ENCODE measurements at regions of chr14 and their contacts with region 1.

Region 1: GRCh38 chr14:23120541-23121251 is 1.6 kb upstream of the CEBPE start:
- DNase-seq: peak; percentile 91
- ATAC-seq: peak; percentile 84
- H3K4me3 Mint-ChIP-seq: peak overlapping the region; percentile 22
- H3K27ac Mint-ChIP-seq: peak overlapping the region; percentile 91
- H3K4me1 Mint-ChIP-seq: peaks cover 35% of the 10 kb centered on the region
- H3K27me3 Mint-ChIP-seq: no peaks in the 10 kb centered on the region

Region 2: GRCh38 chr14:23076785-23077408 is 43.8 kb before region 1 on chr14:
- CTCF ChIA-PET with region 1: interaction called, 16 read pairs
- DNase-seq: no peak
- ATAC-seq: peak; percentile 58
- H3K4me3 Mint-ChIP-seq: no peak overlapping the region
- H3K27ac Mint-ChIP-seq: no peak overlapping the region
- H3K4me1 Mint-ChIP-seq: peaks cover 6% of the 10 kb centered on the region
- H3K27me3 Mint-ChIP-seq: no peaks in the 10 kb centered on the region

Region 3: DNA sequence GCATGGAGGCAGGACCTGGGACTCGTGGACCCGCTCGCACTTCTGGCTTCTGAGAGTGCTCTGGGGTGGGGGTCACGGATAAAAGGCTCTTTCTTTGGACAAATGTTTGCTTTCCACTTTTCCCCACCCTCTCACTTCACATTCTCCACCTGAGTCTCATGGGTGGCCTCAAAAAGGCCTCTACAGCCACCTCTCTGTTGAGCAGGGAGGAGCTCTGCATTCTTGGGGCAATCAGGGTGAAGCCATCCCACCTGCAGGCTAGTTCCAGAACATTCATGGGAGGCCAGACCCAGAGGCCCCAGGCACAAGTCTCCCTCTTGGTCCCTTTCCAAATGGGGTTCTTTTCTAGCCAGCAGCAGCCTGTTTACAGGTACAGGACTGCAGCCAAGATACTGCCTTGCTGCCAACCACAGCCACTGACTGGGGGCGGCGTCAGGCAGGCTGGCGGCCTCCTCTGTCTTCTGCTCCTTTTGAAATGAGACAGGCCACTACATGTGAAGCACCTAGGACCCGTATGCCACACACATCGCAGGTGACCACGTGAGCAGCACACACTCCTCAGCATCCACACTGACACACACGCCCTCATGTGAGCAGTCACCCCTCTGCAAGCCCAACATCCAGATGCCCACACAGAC is 16.6 kb after region 1 on chr14:
- CTCF ChIA-PET with region 1: interaction called, 36 read pairs
- DNase-seq: no peak
- ATAC-seq: no peak
- H3K4me3 Mint-ChIP-seq: no peak overlapping the region
- H3K27ac Mint-ChIP-seq: no peak overlapping the region
- H3K4me1 Mint-ChIP-seq: peaks cover 2% of the 10 kb centered on the region
- H3K27me3 Mint-ChIP-seq: peaks cover 2% of the 10 kb centered on the region

Region 4: DNA sequence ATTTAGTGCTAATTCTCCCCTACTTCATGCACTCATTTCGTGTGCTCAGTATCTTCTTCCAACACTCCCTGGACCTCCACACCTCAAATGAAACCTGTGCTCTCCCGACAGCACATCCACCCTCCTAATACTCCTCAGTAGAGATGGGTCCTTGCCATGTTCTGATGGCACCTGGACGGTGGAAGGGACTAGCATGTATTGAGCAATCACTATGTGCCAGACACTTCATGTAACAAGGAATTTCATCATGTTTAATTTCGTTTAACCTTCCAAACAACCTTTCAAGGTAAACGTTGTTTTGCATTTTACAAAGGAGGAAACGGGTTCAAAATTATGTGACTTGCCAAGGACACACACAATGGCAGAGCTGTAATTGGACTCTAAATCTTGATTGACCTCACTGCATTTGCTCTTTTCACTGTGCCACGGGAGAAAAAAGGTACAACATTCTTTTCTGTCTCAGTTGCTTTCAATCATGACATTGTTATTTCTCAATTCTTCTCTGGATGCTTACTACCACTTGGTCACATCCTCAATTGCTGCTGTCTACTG is 74.9 kb after region 1 on chr14:
- CTCF ChIA-PET with region 1: interaction called, 285 read pairs
- DNase-seq: no peak
- ATAC-seq: no peak
- H3K4me3 Mint-ChIP-seq: no peak overlapping the region
- H3K27ac Mint-ChIP-seq: no peak overlapping the region
- H3K4me1 Mint-ChIP-seq: no peaks in the 10 kb centered on the region
- H3K27me3 Mint-ChIP-seq: peaks cover 11% of the 10 kb centered on the region

Region 5: DNA sequence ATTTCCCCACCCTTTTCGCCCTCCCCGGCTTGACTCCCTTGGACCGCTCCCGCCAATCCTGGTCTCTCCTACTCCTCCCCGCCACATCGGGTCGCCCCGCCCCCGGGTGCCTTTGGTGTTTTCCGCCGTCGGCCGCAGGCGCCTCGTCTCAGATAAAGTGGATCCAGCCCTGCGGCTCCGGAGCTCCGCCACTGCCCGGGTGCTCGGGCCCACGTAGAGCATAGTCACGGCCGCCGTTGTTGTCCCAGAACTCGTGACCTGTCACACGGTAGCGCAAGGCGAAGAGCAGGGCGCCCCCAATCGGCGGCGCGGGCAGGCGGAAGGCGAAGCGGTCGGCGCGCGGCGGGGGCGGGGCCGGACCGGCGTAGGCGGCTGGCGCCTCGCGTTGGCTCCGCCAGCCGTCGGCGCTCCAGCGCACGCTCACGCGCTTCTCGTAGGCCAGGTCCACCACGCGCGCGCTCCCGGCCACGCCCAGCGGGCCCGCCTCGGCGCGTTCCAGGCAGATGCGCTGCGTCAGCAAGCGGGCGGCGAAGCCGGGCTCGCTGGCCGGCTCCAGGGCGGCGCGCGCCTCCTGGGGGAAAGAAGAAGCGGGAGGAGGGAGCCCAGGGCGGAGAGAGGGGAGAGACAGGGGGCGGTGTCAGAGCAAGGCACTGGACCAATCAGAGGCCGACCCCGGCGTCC is 180.7 kb after region 1 on chr14:
- CTCF ChIA-PET with region 1: interaction called, 51 read pairs
- DNase-seq: peak; percentile 98
- ATAC-seq: peak; percentile 85
- H3K4me3 Mint-ChIP-seq: peak overlapping the region; percentile 96
- H3K27ac Mint-ChIP-seq: peak overlapping the region; percentile 92
- H3K4me1 Mint-ChIP-seq: peaks cover 25% of the 10 kb centered on the region
- H3K27me3 Mint-ChIP-seq: peaks cover 12% of the 10 kb centered on the region

Measured in activated CD8-positive, alpha-beta memory T cell treated with anti-CD3 and anti-CD28 coated beads, Interleukin-2, amount 10 ng/mL, durations not matched to agents 7 days and 5 days (primary cell).